ENCODE measurements at regions of chrX and their contacts with region 1.

Region 1: DNA sequence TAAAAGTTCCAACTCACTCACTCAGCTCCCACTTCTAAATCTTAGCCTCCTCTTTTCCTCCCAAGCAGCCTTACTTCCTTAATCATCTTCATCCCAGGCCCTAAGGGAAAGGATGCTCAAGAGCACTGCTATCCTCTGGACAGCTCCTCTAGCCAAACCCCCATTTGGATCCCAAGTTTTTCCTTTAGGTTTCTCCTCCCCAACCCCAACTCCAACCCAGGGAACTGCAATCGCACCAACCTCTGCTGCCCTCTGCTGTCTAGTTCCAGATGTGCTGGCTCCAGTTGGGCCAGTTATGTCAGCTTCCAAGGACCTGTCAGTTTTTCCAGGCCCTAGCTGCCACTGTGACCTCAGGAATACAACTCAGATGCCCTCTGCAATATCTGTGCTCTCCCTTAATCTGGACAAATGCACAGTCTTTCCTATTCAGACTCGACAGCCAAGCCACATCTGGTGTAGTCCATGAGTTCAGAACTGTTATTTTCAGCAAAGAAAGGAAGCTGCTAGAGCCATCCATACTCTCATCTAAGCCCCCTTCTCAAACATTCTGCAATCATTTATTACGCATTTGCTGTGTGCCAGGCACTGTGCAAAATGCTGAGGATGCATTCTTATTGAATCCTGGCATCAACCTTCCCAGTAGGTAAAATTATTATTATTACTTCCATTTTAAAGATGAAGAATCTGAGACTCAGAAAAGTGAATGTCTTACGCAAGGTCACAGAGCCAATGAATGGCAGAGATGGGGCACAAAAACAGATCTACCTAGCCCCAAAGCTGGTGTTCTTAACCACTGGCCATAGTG is 12.3 kb upstream of the XPNPEP2 start:
- DNase-seq: peak; percentile 56
- H3K4me3 ChIP-seq: no peak overlapping the region
- H3K27ac ChIP-seq: no peak overlapping the region
- H3K4me1 ChIP-seq: no peaks in the 10 kb centered on the region
- H3K27me3 ChIP-seq: no peaks in the 10 kb centered on the region
- CTCF ChIP-seq: peak; percentile 44

Region 2: GRCh38 chrX:129637217-129638109 is 89.0 kb before region 1 on chrX:
- intact Hi-C with region 1: loop called (anchors 5 kb)
- DNase-seq: peak; percentile 83
- H3K4me3 ChIP-seq: no peak overlapping the region
- H3K27ac ChIP-seq: no peak overlapping the region
- H3K4me1 ChIP-seq: no peaks in the 10 kb centered on the region
- H3K27me3 ChIP-seq: no peaks in the 10 kb centered on the region
- CTCF ChIP-seq: peak; percentile 93

Region 3: DNA sequence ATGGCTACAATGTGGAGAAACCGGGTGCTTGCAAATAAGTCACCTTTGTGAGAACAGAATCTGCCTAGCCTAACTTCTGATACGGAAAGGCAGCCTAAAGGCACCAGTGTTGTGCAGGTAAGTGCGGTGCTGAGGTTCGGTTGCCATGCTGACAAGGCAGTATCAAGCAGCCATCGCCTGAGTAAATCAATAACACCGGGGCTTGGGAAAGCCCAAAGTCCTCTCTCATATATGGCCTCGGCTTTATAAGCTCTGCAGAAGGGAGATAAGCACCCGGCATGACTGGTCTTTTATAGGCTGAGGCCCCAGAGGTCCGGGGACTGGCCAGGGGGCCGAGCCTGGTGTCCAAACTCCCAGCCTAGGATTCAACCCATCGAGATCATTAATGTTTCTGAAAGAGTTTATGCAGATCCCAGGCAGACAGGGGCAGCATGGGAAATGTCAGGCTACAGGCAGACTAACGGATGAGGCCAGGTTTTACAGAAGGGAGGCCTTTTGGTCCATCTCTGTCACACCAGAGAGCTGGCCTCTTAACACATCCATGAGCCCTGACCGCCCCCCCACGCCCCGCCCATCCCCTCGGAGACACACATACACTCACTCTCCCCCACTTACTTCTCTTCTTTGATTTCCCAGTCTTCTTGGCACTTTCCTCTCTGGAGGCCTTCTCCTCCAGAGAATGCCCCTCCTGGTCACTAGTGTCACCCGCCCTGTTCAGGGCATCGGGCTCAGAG is 345.3 kb after region 1 on chrX:
- intact Hi-C with region 1: no loop called
- DNase-seq: peak; percentile 70
- H3K4me3 ChIP-seq: no peak overlapping the region
- H3K27ac ChIP-seq: peak overlapping the region; percentile 37
- H3K4me1 ChIP-seq: no peaks in the 10 kb centered on the region
- H3K27me3 ChIP-seq: no peaks in the 10 kb centered on the region
- CTCF ChIP-seq: no peak

Measured in colonic mucosa (tissue), 4 donors.